ENCODE measurements at regions of chr5 and their contacts with region 1.

Region 1: GRCh38 chr5:151239237-151239861 is 13.6 kb upstream of the GM2A start:
- DNase-seq: peak; percentile 85
- ATAC-seq: peak in 1 of 2 donors; percentile 75

Region 2: GRCh38 chr5:151002250-151002649 is 237.1 kb before region 1 on chr5:
- intact Hi-C with region 1: loop called in 1 of 2 experiments (anchors 5 kb)
- DNase-seq: no peak
- ATAC-seq: peak in 1 of 2 donors; percentile 7

Region 3: GRCh38 chr5:151126199-151126645 is 113.1 kb before region 1 on chr5:
- intact Hi-C with region 1: loop called (anchors 5 kb)
- DNase-seq: peak; percentile 77
- ATAC-seq: peak; percentile 69